Astrocyte of the cerebellum (primary cell): ENCODE measurements at regions of chr2 and their contacts with region 1.

Region 1: GRCh38 chr2:33033606-33034081 is 86.9 kb downstream of the LTBP1 start:
- DNase-seq: peak; percentile 42
- H3K4me3 ChIP-seq: no peak overlapping the region
- CTCF ChIP-seq: peak; percentile 64

Region 2: GRCh38 chr2:33406622-33407021 is 373.0 kb after region 1 on chr2:
- in situ Hi-C with region 1: no loop called
- DNase-seq: no peak
- H3K4me3 ChIP-seq: no peak overlapping the region
- CTCF ChIP-seq: no peak

Region 3: DNA sequence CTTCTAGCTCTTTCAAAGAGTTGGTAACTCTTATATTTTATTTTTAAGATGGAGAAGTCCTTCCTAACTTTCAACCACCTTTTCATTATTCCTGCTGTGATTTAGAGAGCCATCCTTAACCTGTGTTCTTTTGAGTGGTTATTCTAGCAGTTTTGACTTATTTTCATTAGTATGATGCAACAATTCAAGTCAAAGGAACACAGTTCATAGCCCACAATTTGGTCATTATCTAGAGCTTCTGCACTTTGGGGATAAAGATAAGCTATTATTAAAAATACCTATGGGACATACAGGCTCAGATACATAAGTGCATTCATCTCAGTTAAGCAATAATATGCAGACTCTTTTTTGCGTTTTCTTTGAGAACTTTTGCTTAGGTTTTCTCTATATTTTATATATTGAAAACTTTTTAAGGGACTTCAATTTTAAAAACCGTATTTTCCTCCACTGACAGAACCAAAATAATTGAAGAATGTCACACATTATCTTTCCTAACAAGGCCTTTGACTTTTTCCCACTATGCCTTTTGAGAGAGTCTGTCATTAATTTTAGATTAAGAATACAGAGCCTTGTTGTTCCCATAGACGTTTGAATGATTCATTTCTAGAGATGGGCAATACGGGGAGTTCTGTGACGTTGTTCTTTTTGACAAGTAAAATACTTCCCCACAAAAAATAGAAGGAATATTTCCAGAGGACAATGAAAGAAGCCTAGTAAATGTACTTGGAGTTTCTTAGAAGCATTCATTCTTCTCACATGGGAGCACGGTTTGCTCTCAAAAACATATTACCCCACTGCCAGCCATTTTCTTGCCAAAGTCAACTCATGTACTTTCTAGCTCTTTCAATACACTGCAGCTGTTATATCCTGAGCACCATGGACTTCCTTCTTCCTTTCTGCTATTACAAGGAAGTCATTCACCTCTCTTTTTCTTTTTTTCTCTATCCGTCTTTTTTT is 399.9 kb after region 1 on chr2:
- in situ Hi-C with region 1: loop called (anchors 5 kb)
- DNase-seq: no peak
- H3K4me3 ChIP-seq: no peak overlapping the region
- CTCF ChIP-seq: no peak

Region 4: GRCh38 chr2:33599175-33599942 is 565.7 kb after region 1 on chr2 and contains the start of gene FAM98A:
- in situ Hi-C with region 1: loop called (anchors 25 kb)
- DNase-seq: peak; percentile 98
- H3K4me3 ChIP-seq: peak within 1 kb of the TSS; percentile 96
- CTCF ChIP-seq: no peak